Tibial artery (tissue), 4 donors: ENCODE measurements at regions of chr3 and their contacts with region 1.

Region 1: DNA sequence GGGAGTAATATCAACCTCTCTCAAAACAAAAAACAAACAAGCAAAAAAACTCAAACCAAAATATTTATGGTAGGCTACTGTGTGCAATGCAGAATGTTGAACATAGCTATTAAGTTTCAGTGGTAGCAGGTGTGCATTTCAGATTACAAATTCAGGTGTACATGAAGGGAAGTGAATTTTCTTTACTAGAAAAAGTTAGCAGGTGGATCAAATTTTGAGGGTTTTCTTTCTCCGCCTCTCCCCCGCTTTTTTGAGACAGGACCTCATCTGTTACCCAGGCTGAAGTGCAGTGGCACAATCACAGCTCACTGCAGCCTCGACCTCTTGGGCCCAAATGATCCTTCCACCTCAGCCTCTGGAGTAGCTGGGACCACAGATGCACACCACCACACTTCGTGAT is 109.7 kb upstream of the GOLIM4 start:
- DNase-seq: no peak
- H3K4me3 ChIP-seq: no peak overlapping the region
- H3K27ac ChIP-seq: no peak overlapping the region
- H3K4me1 ChIP-seq: no peaks in the 10 kb centered on the region
- H3K27me3 ChIP-seq: no peaks in the 10 kb centered on the region
- CTCF ChIP-seq: no peak

Region 2: GRCh38 chr3:168295027-168295426 is 89.6 kb after region 1 on chr3:
- intact Hi-C with region 1: no loop called
- DNase-seq: no peak
- H3K4me3 ChIP-seq: no peak overlapping the region
- H3K27ac ChIP-seq: no peak overlapping the region
- H3K4me1 ChIP-seq: no peaks in the 10 kb centered on the region
- H3K27me3 ChIP-seq: no peaks in the 10 kb centered on the region
- CTCF ChIP-seq: no peak

Region 3: DNA sequence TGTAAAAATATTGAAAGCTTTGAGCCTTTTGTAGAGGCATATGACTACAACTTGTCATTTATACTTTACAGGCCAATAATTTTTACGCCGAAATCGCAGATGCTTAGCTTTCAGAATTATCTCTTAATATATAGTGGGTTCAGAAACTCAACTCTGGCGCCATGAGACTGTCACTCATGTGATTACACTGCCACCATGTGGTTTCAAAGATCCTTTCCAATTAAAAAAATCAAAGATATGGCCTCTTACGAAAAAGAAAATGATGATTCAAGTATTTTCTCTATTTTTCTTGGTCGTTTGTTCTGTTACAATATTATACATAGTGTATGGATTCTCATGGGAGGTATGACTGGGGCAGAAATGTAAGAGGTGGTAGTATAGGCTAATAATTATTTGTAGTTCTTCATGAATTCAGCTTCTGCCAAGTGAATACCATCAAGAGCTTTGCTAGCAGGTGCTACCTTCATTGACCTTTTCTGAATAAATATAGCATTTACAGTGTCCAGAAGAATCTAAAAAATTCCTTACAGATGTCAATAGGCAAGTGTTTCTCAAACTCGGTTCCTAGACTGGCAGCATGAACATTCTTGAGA is 641.9 kb after region 1 on chr3:
- intact Hi-C with region 1: loop called (anchors 5 kb)
- DNase-seq: no peak
- H3K4me3 ChIP-seq: no peak overlapping the region
- H3K27ac ChIP-seq: no peak overlapping the region
- H3K4me1 ChIP-seq: no peaks in the 10 kb centered on the region
- H3K27me3 ChIP-seq: peaks cover 0 to 3% of the 10 kb centered on the region in 2 donors
- CTCF ChIP-seq: peak; percentile 26 to 35